ENCODE measurements at regions of chr11 and their contacts with region 1.

Region 1: DNA sequence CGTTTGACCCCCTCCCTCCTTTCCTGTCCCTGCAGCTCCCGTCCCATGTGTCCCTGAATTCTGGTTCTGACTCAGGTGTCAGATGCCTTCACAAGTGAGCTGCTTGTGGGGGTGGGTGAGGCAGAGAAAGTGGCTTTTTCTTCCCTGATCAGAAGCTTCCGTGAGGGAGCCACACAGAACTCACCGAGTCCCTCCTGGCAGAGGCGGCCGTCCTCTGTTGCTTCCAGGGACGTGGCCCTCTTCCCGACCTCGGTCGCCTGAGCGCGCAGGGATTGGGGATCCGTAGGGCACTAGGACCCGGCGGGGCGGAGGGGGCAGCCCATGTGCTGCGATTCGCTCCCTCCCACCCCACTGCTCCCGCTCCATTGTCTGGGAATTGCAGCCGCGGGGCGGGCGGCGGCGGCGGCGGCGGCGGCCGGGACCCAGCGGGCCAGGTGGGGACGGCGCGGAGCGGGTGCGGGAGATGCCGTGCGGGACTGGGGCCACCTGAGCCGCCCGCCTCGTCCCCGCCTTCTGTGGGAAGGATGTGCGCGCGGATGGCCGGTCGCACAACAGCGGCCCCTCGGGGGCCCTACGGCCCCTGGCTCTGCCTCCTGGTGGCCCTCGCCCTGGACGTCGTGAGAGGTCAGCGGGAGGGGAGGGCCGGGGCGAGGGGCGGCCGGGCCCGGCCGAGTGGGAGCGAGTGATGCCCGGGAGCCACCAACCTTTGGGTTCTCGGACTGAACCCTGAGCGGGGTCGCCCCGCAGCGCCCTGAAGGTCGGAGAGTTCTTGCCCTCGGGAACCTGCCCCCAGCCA is at the start of gene TMEM132A:
- H3K4me3 ChIP-seq: peak within 1 kb of the TSS; percentile 72
- H3K27ac ChIP-seq: peak within 1 kb of the TSS; percentile 46; the same call in 1 of the 2 replicates
- H3K4me1 ChIP-seq: no peaks in the 10 kb centered on the region
- CTCF ChIP-seq: no peak

Region 2: GRCh38 chr11:60913793-60914632 is 10.3 kb before region 1 on chr11 and contains the start of gene TMEM109:
- CTCF ChIA-PET with region 1: interaction called, 3 read pairs
- POLR2A ChIA-PET with region 1: interaction called, 22 read pairs
- H3K4me3 ChIP-seq: peak within 1 kb of the TSS; percentile 55
- H3K27ac ChIP-seq: peak within 1 kb of the TSS; percentile 61
- H3K4me1 ChIP-seq: no peaks in the 10 kb centered on the region
- CTCF ChIP-seq: no peak

Measured in HEK293 (cell line).